Heart right ventricle (tissue), 16 donors: ENCODE measurements at regions of chr1 and their contacts with region 1.

Region 1: DNA sequence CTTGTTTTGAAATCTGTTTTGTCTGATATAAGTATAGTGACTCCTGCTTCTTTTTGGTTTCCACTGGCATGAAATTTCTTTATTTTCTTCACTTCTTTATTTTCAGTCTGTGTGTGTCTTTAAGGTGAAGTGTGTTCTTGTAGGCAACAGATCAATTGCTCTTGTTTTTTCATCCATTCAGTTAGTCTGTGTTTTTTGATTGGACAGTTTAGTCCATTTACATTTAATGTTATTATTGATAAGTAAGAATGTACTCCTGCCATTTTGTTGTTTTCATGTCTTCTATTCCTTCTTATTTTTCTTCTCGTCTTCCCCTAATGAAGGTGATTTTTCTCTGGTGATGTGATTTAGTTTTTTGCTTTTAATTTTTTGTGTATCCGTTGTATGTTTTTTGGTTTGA is 487.7 kb upstream of the PBX1 start:
- DNase-seq: no peak
- ATAC-seq: no peak
- H3K4me3 ChIP-seq: no peak overlapping the region
- H3K27ac ChIP-seq: no peak overlapping the region
- H3K4me1 ChIP-seq: no peaks in the 10 kb centered on the region
- H3K27me3 ChIP-seq: no peaks in the 10 kb centered on the region
- CTCF ChIP-seq: no peak

Region 2: DNA sequence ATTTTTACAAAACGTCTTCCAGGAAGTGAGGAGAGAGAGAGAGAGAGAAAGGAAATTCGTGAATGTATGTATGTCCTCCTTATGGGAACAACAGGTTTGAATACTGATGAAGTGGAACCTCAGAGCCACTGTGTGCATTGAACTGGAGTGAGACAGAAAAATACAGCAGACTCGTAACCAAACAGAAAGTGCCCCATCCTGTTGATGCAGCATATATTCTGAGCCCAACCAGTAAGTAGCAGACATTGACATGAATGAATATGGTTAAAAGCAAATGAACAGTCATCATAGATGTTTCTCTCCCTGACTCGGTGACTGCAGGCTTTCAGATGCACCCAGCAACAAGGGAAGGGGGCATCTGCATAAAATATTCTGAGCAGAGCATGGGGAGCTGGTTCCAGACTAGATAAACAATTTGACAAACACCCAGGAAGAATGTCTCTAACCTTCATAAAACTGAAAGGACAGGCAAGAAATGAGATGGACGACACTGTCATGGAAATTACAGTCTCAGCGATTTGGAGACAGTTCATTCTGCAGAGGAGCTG is 16.7 kb after region 1 on chr1:
- intact Hi-C with region 1: loop called in 1 of 10 experiments (anchors 2 kb)
- DNase-seq: no peak
- ATAC-seq: no peak
- H3K4me3 ChIP-seq: no peak overlapping the region
- H3K27ac ChIP-seq: no peak overlapping the region
- H3K4me1 ChIP-seq: no peaks in the 10 kb centered on the region
- H3K27me3 ChIP-seq: no peaks in the 10 kb centered on the region
- CTCF ChIP-seq: no peak